GM12878 (cell line): ENCODE measurements at regions of chr4 and their contacts with region 1.

Region 1: GRCh38 chr4:89906777-89907521 is 12.3 kb downstream of the MMRN1 start:
- DNase-seq: no peak
- ATAC-seq: peak; percentile 79
- H3K4me3 ChIP-seq: no peak overlapping the region
- H3K27ac ChIP-seq: no peak overlapping the region
- H3K4me1 ChIP-seq: no peaks in the 10 kb centered on the region
- H3K27me3 ChIP-seq: no peaks in the 10 kb centered on the region
- CTCF ChIP-seq: no peak
- EP300 ChIP-seq: peak; percentile 72 to 83; a peak in 2 of 4 replicates
- POLR2A ChIP-seq: no peak
- RAD21 ChIP-seq: no peak

Region 2: DNA sequence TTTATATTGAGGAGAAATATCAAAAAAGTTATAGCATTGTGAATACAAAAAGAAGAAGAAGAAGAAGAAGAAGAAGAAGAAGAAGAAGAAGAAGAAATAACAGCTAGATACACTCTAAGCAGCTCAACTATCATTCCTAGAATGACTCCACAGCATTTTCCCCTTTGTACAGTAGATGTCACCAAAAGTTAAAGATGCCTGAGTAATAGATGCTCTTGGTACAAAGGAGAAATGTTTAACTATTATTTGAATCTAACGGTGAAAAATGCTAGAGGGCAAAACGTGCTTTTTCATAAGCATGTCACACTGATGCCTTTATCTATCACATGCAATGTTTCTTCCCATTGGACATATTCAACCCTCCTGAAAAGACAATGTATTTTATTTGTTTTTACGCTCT is 420.9 kb before region 1 on chr4:
- CTCF ChIA-PET with region 1: interaction called, 6 read pairs
- POLR2A ChIA-PET with region 1: no interaction called
- RAD21 ChIA-PET with region 1: interaction called, 3 read pairs
- SMC1A ChIA-PET with region 1: interaction called, 5 read pairs
- in situ Hi-C with region 1: no loop called
- intact Hi-C with region 1: loop called (anchors 5 kb)
- DNase-seq: no peak
- ATAC-seq: peak; percentile 52; the same call in 2 of the 3 replicates
- H3K4me3 ChIP-seq: no peak overlapping the region
- H3K27ac ChIP-seq: no peak overlapping the region
- H3K4me1 ChIP-seq: no peaks in the 10 kb centered on the region
- H3K27me3 ChIP-seq: no peaks in the 10 kb centered on the region
- CTCF ChIP-seq: peak in 2 of 3 experiments; percentile 6 to 25; a peak in 3 of 6 replicates
- EP300 ChIP-seq: no peak
- POLR2A ChIP-seq: no peak
- RAD21 ChIP-seq: peak; percentile 56

Region 3: DNA sequence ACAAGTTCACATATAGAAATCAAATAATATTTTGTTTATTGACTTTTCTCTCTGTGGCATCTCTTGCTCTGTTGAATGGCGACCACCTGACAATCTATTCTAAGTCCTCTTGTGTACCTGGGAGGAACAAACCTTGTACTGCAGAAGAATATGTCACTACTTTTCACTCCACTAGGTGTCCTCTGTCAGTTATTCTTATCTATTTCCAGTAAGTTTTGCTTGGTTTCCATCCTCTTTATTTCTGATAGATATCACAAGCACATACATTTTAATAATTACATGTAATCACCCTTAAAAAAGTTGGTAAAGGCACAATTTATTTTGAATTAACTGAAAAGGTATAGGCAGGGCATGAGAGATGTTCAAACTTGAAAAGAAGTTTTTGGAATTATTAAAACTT is 308.3 kb before region 1 on chr4:
- CTCF ChIA-PET with region 1: interaction called, 3 read pairs
- POLR2A ChIA-PET with region 1: no interaction called
- RAD21 ChIA-PET with region 1: no interaction called
- SMC1A ChIA-PET with region 1: interaction called, 3 read pairs
- in situ Hi-C with region 1: no loop called
- intact Hi-C with region 1: loop called (anchors 5 kb)
- DNase-seq: no peak
- ATAC-seq: 0 out of 3 replicates have a peak, but pooled peaks have one; percentile 43
- H3K4me3 ChIP-seq: no peak overlapping the region
- H3K27ac ChIP-seq: no peak overlapping the region
- H3K4me1 ChIP-seq: no peaks in the 10 kb centered on the region
- H3K27me3 ChIP-seq: no peaks in the 10 kb centered on the region
- CTCF ChIP-seq: no peak; a peak in 1 of 6 replicates
- EP300 ChIP-seq: no peak
- POLR2A ChIP-seq: no peak
- RAD21 ChIP-seq: no peak

Region 4: GRCh38 chr4:89797117-89797516 is 109.8 kb before region 1 on chr4:
- CTCF ChIA-PET with region 1: no interaction called
- POLR2A ChIA-PET with region 1: no interaction called
- RAD21 ChIA-PET with region 1: no interaction called
- SMC1A ChIA-PET with region 1: no interaction called
- in situ Hi-C with region 1: no loop called
- intact Hi-C with region 1: no loop called
- DNase-seq: no peak
- ATAC-seq: no peak
- H3K4me3 ChIP-seq: no peak overlapping the region
- H3K27ac ChIP-seq: no peak overlapping the region
- H3K4me1 ChIP-seq: no peaks in the 10 kb centered on the region
- H3K27me3 ChIP-seq: no peaks in the 10 kb centered on the region; a peak in 1 of 4 replicates
- CTCF ChIP-seq: no peak
- EP300 ChIP-seq: no peak
- POLR2A ChIP-seq: no peak
- RAD21 ChIP-seq: no peak

Region 5: GRCh38 chr4:89847571-89848325 is 59.2 kb before region 1 on chr4:
- CTCF ChIA-PET with region 1: no interaction called
- POLR2A ChIA-PET with region 1: no interaction called
- RAD21 ChIA-PET with region 1: no interaction called
- SMC1A ChIA-PET with region 1: no interaction called
- in situ Hi-C with region 1: no loop called
- intact Hi-C with region 1: no loop called
- DNase-seq: no peak
- ATAC-seq: no peak
- H3K4me3 ChIP-seq: no peak overlapping the region
- H3K27ac ChIP-seq: no peak overlapping the region
- H3K4me1 ChIP-seq: no peaks in the 10 kb centered on the region
- H3K27me3 ChIP-seq: no peaks in the 10 kb centered on the region
- CTCF ChIP-seq: no peak
- EP300 ChIP-seq: no peak
- POLR2A ChIP-seq: no peak
- RAD21 ChIP-seq: no peak

Region 6: GRCh38 chr4:90174611-90175133 is 267.7 kb after region 1 on chr4:
- CTCF ChIA-PET with region 1: no interaction called
- POLR2A ChIA-PET with region 1: no interaction called
- RAD21 ChIA-PET with region 1: no interaction called
- SMC1A ChIA-PET with region 1: no interaction called
- in situ Hi-C with region 1: no loop called
- intact Hi-C with region 1: no loop called
- DNase-seq: no peak
- ATAC-seq: no peak
- H3K4me3 ChIP-seq: no peak overlapping the region
- H3K27ac ChIP-seq: no peak overlapping the region
- H3K4me1 ChIP-seq: no peaks in the 10 kb centered on the region
- H3K27me3 ChIP-seq: no peaks in the 10 kb centered on the region
- CTCF ChIP-seq: no peak
- EP300 ChIP-seq: no peak
- POLR2A ChIP-seq: no peak
- RAD21 ChIP-seq: no peak